ENCODE measurements at regions of chr1 and their contacts with region 1.

Region 1: DNA sequence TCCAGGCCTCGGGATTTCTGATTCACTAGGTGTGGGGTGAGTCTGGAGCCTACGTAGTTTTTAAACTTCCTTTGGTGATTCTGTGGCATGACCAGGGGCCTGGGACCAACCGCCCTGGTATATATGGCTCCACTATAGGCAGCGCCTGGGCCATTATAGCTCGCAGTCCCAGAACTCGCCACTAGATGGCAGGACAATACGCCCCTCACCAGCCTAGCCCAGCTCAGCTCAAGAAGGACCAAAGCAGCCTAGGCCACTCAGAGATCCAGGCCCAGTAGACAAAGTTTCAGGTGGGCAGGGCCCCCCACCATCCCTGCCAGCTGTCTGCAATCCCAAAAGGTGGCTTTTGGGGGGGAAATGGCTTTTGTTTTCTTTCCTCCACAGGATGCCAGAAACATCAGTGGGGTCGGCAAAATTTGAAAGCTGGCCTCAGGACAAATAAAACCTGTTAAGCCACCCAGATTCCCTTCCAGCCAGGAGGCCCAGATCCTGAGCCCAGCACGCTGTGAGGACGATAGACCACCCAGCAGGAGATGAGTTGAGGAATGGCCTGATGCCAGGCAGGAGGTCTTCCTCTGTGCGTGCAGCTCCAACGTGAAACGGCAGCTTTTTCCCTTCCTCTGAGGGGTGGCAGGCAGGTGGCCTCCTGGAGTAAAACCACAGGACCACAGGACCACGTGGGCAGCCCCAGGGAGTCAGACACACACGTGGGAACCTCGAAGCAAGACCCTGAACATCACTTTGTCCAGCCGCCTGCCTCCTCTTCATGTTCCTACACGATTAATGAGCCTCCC is 24.8 kb upstream of the TMEM51 start:
- DNase-seq: peak; percentile 67 to 70
- ATAC-seq: peak; percentile 97 to 100
- H3K4me3 ChIP-seq: no peak overlapping the region
- H3K27ac ChIP-seq: peak overlapping the region in 1 of 2 experiments; percentile 51; a peak in 3 of 6 replicates
- H3K4me1 ChIP-seq: no peaks in the 10 kb centered on the region
- CTCF ChIP-seq: peak; percentile 72
- EP300 ChIP-seq: no peak
- POLR2A ChIP-seq: no peak
- RAD21 ChIP-seq: peak; percentile 80 to 87

Region 2: GRCh38 chr1:15056515-15057285 is 72.0 kb before region 1 on chr1:
- CTCF ChIA-PET with region 1: no interaction called
- POLR2A ChIA-PET with region 1: no interaction called
- DNase-seq: no peak
- ATAC-seq: peak; percentile 79 to 80
- H3K4me3 ChIP-seq: no peak overlapping the region
- H3K27ac ChIP-seq: no peak overlapping the region
- H3K4me1 ChIP-seq: no peaks in the 10 kb centered on the region
- CTCF ChIP-seq: no peak
- EP300 ChIP-seq: no peak
- POLR2A ChIP-seq: no peak
- RAD21 ChIP-seq: no peak

Region 3: DNA sequence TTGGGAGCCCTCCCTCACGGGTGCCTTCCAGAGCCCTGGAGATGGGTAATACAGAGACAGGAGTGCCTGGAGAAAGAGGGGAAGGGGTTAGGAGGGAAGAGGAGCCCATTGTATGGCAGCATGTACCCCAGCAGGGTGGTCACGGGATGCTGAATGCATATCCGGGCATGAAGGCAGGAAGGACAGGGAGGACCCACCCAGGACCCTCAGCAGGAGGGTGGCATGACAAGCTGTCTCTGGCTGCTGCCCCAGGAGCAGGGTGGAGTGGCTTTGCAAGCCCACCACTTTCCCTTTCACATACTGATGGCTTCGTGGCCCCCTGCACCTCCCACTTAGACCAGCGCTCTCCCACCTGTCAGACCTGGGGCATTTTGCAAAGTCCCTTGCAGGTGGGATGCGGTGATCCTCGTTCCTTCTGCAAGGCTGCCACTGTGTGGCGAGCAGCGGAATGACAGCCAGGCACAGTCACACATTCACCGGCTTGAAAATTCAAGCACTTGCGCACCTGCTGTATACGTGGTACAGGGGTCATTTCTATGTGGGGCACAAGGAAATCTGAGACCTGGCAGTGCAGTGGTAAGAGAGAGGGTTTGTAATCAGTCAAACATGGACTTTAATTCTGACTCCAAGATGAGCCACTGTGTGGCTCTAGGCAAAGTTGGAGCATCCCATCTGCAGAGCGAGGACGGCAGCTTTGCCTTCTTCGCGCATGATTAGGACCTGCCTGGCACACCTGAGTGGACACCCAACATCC is 28.4 kb before region 1 on chr1:
- CTCF ChIA-PET with region 1: interaction called, 10 read pairs
- POLR2A ChIA-PET with region 1: no interaction called
- DNase-seq: peak; percentile 38 to 50
- ATAC-seq: peak; percentile 70 to 89; a peak in 5 of 6 replicates
- H3K4me3 ChIP-seq: no peak overlapping the region
- H3K27ac ChIP-seq: no peak overlapping the region
- H3K4me1 ChIP-seq: no peaks in the 10 kb centered on the region
- CTCF ChIP-seq: peak; percentile 68
- EP300 ChIP-seq: no peak
- POLR2A ChIP-seq: no peak
- RAD21 ChIP-seq: peak; percentile 81 to 82

Region 4: GRCh38 chr1:15141935-15142539 is 13.3 kb after region 1 on chr1:
- CTCF ChIA-PET with region 1: interaction called, 15 read pairs
- POLR2A ChIA-PET with region 1: no interaction called
- DNase-seq: no peak
- ATAC-seq: no peak
- H3K4me3 ChIP-seq: no peak overlapping the region
- H3K27ac ChIP-seq: no peak overlapping the region
- H3K4me1 ChIP-seq: no peaks in the 10 kb centered on the region
- CTCF ChIP-seq: no peak
- EP300 ChIP-seq: no peak
- POLR2A ChIP-seq: no peak
- RAD21 ChIP-seq: no peak

Region 5: GRCh38 chr1:15304701-15305467 is 176.2 kb after region 1 on chr1:
- CTCF ChIA-PET with region 1: interaction called, 38 read pairs
- POLR2A ChIA-PET with region 1: no interaction called
- DNase-seq: peak; percentile 46 to 52
- ATAC-seq: peak; percentile 71 to 94
- H3K4me3 ChIP-seq: no peak overlapping the region
- H3K27ac ChIP-seq: peak overlapping the region; percentile 44 to 80; a peak in 4 of 6 replicates
- H3K4me1 ChIP-seq: peaks cover 6% of the 10 kb centered on the region; the same call in 2 of the 3 replicates
- CTCF ChIP-seq: peak; percentile 84
- EP300 ChIP-seq: no peak
- POLR2A ChIP-seq: no peak
- RAD21 ChIP-seq: peak; percentile 81 to 92